GM10248 (cell line): ENCODE measurements at regions of chr14 and their contacts with region 1.

Region 1: DNA sequence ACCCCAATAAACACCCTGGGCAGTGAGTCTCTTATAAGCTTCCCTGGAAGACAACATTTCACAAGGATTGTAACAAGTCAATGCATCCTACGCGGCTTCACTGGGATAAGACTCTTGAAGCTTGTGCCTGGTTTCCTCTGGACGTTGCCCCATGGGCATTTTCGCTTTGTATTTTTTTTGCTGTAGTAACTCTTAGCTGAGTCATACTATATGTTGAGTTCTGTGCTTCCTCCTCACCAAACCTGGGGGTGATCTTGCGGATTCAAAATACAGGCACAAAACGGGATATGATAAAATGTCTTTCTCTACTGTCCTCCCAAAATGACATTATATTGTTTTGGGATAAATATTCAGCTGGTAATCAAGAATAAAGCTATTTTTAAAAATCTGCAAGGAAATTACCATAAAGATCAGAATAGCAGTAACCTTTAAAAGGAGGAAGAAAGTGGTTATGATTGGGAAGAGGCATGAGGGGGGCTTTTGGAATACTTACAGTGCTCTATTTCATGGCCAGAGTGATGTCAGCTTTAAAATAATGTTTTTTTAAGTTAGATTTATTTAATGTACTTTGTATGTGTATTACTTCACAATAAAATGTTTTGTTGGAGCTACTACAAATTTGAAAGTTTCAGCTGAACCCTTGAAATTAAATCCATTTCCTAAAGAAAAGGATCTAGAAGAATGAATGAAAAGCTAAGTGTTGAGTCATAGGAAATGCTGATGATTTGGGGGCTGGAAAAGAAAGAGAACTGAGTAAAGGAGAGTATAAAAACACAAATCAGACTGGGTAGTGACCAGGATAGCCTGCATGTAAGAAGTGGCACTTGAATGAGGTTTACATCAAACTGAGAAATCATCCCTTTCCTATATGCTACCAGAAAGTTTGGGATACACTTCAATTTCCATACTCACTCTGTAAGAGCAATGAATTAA is 14.7 kb downstream of the BTBD7 start:
- DNase-seq: no peak
- CTCF ChIP-seq: no peak

Region 2: GRCh38 chr14:93332397-93332852 is 14.3 kb after region 1 on chr14:
- CTCF ChIA-PET with region 1: interaction called, 10 read pairs
- POLR2A ChIA-PET with region 1: no interaction called
- DNase-seq: peak; percentile 77
- CTCF ChIP-seq: no peak

Region 3: DNA sequence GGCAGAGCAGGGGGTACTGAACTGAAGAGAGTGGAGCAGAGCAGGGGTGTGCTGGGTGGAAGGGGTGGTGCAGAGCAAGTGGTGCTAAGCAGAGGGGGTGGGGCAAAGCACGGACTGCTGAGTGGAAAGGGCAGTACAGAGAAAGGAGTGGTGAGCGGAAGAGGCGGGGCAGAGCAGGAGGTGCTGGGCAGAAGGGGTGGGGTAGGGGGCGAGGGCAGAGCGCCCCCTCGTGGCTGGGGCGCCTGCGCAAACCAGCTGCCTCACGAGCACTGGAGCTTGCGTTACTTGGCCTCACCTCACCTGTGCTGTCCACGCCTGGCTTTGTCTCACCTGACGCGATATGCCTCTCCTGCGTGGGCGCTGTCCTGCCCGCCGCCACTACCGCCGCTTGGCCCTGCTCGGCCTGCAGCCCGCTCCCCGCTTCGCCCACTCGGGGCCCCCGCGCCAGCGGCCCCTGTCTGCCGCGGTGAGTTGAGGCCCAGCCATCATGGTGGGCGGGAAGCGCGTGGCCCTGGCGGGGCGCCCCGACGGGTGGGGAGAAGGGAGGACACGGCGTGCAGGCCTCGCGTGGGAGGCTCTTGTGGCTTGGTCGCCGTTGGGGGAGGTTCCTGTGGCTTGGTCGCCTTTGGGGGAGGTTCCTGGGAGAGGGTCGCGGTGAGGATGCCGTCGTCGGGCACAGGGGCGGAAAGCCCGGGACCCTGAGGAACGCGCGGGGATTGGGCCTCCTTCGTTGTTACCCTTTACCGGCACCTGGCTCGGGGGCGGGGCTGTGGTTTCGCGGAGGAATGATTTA is 29.0 kb after region 1 on chr14 and contains the start of gene COX8C:
- CTCF ChIA-PET with region 1: no interaction called
- POLR2A ChIA-PET with region 1: no interaction called
- DNase-seq: no peak
- CTCF ChIP-seq: no peak